OCI-LY7 (cell line): ENCODE measurements at regions of chr18 and their contacts with region 1.

Region 1: DNA sequence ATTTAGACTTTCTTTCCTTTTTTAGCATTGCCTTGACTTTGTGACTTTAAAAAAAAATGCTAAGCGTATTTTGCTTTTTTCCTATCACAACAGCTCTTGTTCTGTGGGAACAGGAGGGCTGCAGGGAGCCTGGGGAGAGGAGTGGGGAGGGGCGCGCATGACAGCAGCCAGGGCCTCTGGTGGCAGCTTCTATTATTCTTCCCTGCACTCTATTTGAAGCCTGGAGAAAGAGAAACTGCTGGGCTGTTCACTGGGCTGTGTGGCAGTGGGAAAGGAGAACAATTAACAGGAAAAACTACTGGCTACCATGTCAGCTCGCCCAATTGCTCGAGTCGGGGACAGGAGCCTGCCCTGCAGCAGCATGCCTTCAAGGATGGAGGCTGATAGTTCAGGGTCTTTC is 119.0 kb upstream of the ZBTB14 start:
- DNase-seq: no peak
- H3K4me3 ChIP-seq: no peak overlapping the region
- H3K27ac ChIP-seq: no peak overlapping the region
- H3K4me1 ChIP-seq: peaks cover 16% of the 10 kb centered on the region
- CTCF ChIP-seq: no peak

Region 2: GRCh38 chr18:5073026-5073944 is 341.3 kb before region 1 on chr18:
- CTCF ChIA-PET with region 1: no interaction called
- POLR2A ChIA-PET with region 1: no interaction called
- intact Hi-C with region 1: no loop called
- DNase-seq: peak; percentile 50
- H3K4me3 ChIP-seq: no peak overlapping the region
- H3K27ac ChIP-seq: no peak overlapping the region
- H3K4me1 ChIP-seq: peaks cover 10% of the 10 kb centered on the region
- CTCF ChIP-seq: peak; percentile 83

Region 3: GRCh38 chr18:5097116-5097703 is 317.3 kb before region 1 on chr18:
- CTCF ChIA-PET with region 1: no interaction called
- POLR2A ChIA-PET with region 1: no interaction called
- intact Hi-C with region 1: loop called (anchors 10 kb)
- DNase-seq: no peak
- H3K4me3 ChIP-seq: no peak overlapping the region
- H3K27ac ChIP-seq: no peak overlapping the region
- H3K4me1 ChIP-seq: no peaks in the 10 kb centered on the region
- CTCF ChIP-seq: no peak